ENCODE measurements at regions of chr3 and their contacts with region 1.

Region 1: DNA sequence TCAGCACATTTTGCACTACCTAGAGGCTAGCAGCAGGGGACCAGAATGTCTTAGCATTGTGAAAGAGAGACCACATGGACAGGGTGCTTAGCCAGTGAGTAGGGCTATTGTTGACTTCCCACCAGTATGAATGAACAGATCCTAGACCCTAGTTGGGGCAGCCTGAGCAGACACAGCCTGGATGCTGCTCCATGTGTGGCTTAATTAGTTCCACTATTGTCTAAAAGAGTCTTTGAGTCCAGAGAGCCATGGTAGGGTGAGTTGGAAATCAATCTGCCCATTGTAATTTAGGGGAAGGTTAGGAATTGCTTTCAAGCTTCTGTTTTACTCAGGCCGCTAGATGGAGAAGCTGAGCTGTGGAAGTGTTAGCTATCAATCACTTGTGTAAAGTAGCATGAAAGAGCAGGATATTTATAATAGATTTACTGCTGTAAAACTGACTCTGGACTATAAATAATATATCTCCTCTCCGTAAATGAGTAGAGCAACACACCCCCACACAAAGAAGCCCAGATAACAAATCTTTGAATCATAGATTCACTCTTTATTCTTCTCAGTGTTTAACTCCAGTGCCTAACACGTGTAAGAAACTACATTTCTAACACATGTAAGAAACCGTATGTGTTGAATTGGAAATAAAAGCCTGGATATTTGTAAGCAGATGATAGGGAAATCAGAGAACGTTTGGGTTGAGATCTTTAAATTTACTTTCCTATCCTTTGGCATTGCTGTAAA is 4.1 kb upstream of the GCSAM start:
- DNase-seq: peak; percentile 59
- H3K4me3 Mint-ChIP-seq: no peak overlapping the region
- H3K27ac Mint-ChIP-seq: no peak overlapping the region
- H3K4me1 Mint-ChIP-seq: peaks cover 70% of the 10 kb centered on the region
- H3K27me3 Mint-ChIP-seq: no peaks in the 10 kb centered on the region

Region 2: GRCh38 chr3:112074721-112075497 is 62.2 kb before region 1 on chr3:
- CTCF ChIA-PET with region 1: no interaction called
- POLR2A ChIA-PET with region 1: no interaction called
- intact Hi-C with region 1: loop called (anchors 2 kb)
- DNase-seq: peak; percentile 68
- H3K4me3 Mint-ChIP-seq: peak overlapping the region; percentile 16
- H3K27ac Mint-ChIP-seq: peak overlapping the region; percentile 35
- H3K4me1 Mint-ChIP-seq: peaks cover 37% of the 10 kb centered on the region
- H3K27me3 Mint-ChIP-seq: no peaks in the 10 kb centered on the region

Region 3: GRCh38 chr3:112333002-112333380 is 195.9 kb after region 1 on chr3 and contains the start of gene CD200:
- CTCF ChIA-PET with region 1: interaction called, 13 read pairs
- POLR2A ChIA-PET with region 1: no interaction called
- intact Hi-C with region 1: loop called (anchors 2 kb)
- DNase-seq: peak; percentile 71
- H3K4me3 Mint-ChIP-seq: peak within 1 kb of the TSS; percentile 87
- H3K27ac Mint-ChIP-seq: peak within 1 kb of the TSS; percentile 88
- H3K4me1 Mint-ChIP-seq: peaks cover 46% of the 10 kb centered on the region
- H3K27me3 Mint-ChIP-seq: no peaks in the 10 kb centered on the region
- total RNA-seq, gene CD200: 34.2 to 34.5 TPM

Region 4: DNA sequence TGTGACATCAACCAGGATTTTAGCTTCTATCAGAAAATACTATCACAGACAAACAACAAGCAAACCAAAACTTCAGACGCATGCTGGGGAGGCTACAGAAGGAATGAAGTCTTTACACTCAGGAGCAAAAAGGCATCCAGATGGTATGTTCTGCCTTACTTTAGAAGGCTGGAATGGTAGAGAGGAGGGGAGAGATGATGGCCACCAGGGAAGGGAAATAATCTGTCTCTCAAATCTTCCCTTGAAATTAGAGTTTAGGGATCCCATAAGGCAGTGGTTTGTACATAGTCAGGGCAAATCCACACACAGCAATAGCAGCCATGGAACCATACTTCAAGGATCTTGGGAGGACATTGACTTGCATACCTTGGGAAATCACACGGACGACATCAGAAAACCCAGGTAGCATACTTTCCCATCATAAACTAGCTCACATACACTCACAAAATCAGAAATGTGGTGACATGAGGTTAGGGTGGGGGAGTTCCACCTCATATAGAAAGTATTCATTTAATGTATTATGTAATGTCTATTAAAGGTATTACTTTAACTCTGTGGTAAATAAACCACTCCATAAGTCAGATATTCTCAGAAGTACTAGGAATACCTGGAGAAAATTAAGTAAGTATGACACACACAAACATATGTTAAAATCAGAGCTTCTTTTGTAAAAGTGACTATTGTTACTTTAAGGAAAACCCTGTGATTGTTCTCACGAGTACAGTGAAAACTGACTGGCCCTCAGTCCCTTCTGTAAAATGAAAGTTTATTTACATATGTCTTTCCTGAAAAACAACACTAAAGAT is 352.8 kb after region 1 on chr3:
- CTCF ChIA-PET with region 1: no interaction called
- POLR2A ChIA-PET with region 1: no interaction called
- intact Hi-C with region 1: loop called (anchors 2 kb)
- DNase-seq: no peak
- H3K4me3 Mint-ChIP-seq: peak overlapping the region; percentile 47
- H3K27ac Mint-ChIP-seq: peak overlapping the region; percentile 68
- H3K4me1 Mint-ChIP-seq: peaks cover 64% of the 10 kb centered on the region
- H3K27me3 Mint-ChIP-seq: no peaks in the 10 kb centered on the region

Region 5: GRCh38 chr3:112531358-112531781 is 394.2 kb after region 1 on chr3:
- CTCF ChIA-PET with region 1: interaction called, 3 read pairs
- POLR2A ChIA-PET with region 1: no interaction called
- intact Hi-C with region 1: loop called (anchors 1 kb)
- DNase-seq: no peak
- H3K4me3 Mint-ChIP-seq: no peak overlapping the region
- H3K27ac Mint-ChIP-seq: no peak overlapping the region
- H3K4me1 Mint-ChIP-seq: peaks cover 7% of the 10 kb centered on the region
- H3K27me3 Mint-ChIP-seq: no peaks in the 10 kb centered on the region

Region 6: GRCh38 chr3:112676659-112677234 is 539.6 kb after region 1 on chr3:
- CTCF ChIA-PET with region 1: no interaction called
- POLR2A ChIA-PET with region 1: no interaction called
- intact Hi-C with region 1: loop called (anchors 5 kb)
- DNase-seq: peak; percentile 96
- H3K4me3 Mint-ChIP-seq: peak overlapping the region; percentile 14
- H3K27ac Mint-ChIP-seq: peak overlapping the region; percentile 14
- H3K4me1 Mint-ChIP-seq: peaks cover 52% of the 10 kb centered on the region
- H3K27me3 Mint-ChIP-seq: peaks cover 14% of the 10 kb centered on the region